ENCODE measurements at regions of chr11 and their contacts with region 1.

Region 1: DNA sequence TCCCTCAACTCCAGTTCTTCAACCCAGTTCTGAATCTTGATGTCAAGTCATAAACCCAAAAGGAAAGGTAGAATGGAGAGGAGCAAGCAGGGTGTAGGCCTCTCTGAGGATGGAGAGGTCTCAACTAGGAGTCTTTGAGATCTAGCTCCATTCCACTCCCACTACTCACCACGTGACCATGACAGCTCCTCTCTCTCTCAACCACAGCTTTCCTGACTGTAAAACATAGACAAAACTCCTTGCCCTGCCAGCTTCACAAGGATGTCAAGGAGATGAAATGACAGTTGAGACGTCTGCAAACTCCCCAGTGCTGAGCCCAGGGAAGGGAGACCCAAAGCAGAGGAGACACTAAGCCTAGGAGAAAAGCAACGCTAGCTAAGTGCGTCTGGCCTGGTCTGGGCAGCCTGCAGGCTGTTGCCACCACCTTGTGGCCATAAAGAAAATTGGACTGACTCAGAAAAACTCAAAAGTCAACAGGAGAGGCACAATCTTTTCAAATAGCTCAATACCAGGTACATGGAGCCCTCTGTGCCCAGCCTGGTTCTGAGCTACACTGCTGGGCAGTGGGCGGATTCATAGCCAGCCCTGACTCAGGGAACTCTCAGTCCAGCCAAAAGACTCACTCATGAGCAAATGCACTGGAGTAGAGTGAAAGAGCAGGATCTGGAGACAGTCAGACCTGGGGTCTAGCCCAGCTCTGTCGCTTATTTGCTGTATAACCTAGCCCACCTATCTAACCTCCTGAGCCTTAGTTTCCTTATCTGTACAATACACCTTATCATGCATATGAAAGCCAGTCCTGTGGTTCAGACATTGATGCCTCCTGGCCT is 3.4 kb downstream of the CLPB start:
- DNase-seq: peak; percentile 60
- ATAC-seq: peak; percentile 28
- H3K4me3 Mint-ChIP-seq: no peak overlapping the region
- H3K27ac Mint-ChIP-seq: peak overlapping the region; percentile 53
- H3K4me1 Mint-ChIP-seq: peaks cover 51% of the 10 kb centered on the region
- H3K27me3 Mint-ChIP-seq: no peaks in the 10 kb centered on the region

Region 2: GRCh38 chr11:71977743-71978418 is 453.1 kb before region 1 on chr11:
- CTCF ChIA-PET with region 1: interaction called, 27 read pairs
- POLR2A ChIA-PET with region 1: no interaction called
- DNase-seq: peak; percentile 74
- ATAC-seq: peak; percentile 70
- H3K4me3 Mint-ChIP-seq: no peak overlapping the region
- H3K27ac Mint-ChIP-seq: no peak overlapping the region
- H3K4me1 Mint-ChIP-seq: no peaks in the 10 kb centered on the region
- H3K27me3 Mint-ChIP-seq: no peaks in the 10 kb centered on the region

Region 3: GRCh38 chr11:72091005-72091691 is 339.8 kb before region 1 on chr11:
- CTCF ChIA-PET with region 1: interaction called, 13 read pairs
- POLR2A ChIA-PET with region 1: no interaction called
- DNase-seq: peak; percentile 76
- ATAC-seq: peak; percentile 87
- H3K4me3 Mint-ChIP-seq: no peak overlapping the region
- H3K27ac Mint-ChIP-seq: peak overlapping the region; percentile 43
- H3K4me1 Mint-ChIP-seq: peaks cover 4% of the 10 kb centered on the region
- H3K27me3 Mint-ChIP-seq: no peaks in the 10 kb centered on the region

Region 4: GRCh38 chr11:72222907-72223614 is 207.9 kb before region 1 on chr11:
- CTCF ChIA-PET with region 1: interaction called, 17 read pairs
- POLR2A ChIA-PET with region 1: interaction called, 6 read pairs
- DNase-seq: peak; percentile 96
- ATAC-seq: peak; percentile 80
- H3K4me3 Mint-ChIP-seq: peak overlapping the region; percentile 85
- H3K27ac Mint-ChIP-seq: peak overlapping the region; percentile 81
- H3K4me1 Mint-ChIP-seq: peaks cover 44% of the 10 kb centered on the region
- H3K27me3 Mint-ChIP-seq: peaks cover 4% of the 10 kb centered on the region

Region 5: DNA sequence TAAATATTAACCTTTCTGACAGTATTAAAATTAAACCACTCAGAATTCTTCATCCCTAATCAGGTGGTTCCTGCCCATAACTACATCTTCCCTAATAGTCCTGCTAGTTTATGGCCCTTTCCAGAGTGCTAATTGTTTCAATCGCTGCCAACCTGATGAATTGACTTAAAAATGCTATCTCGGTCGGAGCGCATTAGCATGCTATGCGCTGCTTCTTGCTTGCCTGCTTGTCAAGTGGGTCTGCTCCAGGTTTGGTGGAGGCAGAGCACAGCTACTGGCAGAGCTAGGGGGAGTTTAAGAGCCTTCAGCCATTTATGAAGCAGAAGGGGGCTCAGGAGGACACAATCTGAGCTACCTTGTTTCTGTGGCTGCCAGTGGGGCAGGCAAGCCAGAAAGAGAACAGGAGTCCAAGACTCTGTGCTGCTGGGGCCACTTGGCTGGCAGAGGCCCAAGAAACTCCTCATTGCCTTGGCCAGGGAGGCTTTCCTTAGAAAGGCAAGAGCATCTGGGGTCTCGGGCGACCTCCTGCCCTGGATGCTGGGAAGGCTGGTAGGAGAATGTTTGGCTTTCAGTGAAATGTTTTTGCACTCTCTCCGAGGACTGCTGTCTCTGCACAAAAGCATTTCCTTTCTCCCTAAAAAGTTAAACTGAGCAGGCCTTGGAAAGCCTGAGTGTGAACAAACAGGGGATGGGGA is 124.9 kb before region 1 on chr11:
- CTCF ChIA-PET with region 1: interaction called, 15 read pairs
- POLR2A ChIA-PET with region 1: no interaction called
- DNase-seq: no peak
- ATAC-seq: no peak
- H3K4me3 Mint-ChIP-seq: no peak overlapping the region
- H3K27ac Mint-ChIP-seq: no peak overlapping the region
- H3K4me1 Mint-ChIP-seq: no peaks in the 10 kb centered on the region
- H3K27me3 Mint-ChIP-seq: no peaks in the 10 kb centered on the region

Region 6: DNA sequence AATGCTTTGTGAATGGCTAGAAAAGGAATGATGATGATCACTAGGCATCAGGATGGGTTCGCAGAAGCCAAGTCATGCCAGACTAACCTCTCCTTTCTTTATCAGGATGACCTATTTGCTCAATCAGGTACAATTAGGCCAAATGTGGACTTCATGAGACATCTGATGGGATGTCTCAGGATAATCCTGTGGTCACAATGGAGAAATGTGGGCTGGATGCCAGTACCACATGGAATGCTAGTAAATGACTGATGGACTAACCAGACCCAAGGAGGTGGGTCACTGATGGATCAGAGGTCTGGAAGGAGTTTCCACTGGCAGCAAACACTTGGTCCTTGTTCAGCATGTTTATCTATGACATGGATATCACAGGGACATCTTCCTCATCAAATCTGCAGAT is 92.2 kb before region 1 on chr11:
- CTCF ChIA-PET with region 1: interaction called, 90 read pairs
- POLR2A ChIA-PET with region 1: no interaction called
- DNase-seq: no peak
- ATAC-seq: no peak
- H3K4me3 Mint-ChIP-seq: no peak overlapping the region
- H3K27ac Mint-ChIP-seq: no peak overlapping the region
- H3K4me1 Mint-ChIP-seq: peaks cover 12% of the 10 kb centered on the region
- H3K27me3 Mint-ChIP-seq: no peaks in the 10 kb centered on the region

Region 7: GRCh38 chr11:72441752-72442207 is 10.8 kb after region 1 on chr11:
- CTCF ChIA-PET with region 1: interaction called, 71 read pairs
- POLR2A ChIA-PET with region 1: interaction called, 3 read pairs
- DNase-seq: no peak
- ATAC-seq: peak; percentile 23
- H3K4me3 Mint-ChIP-seq: no peak overlapping the region
- H3K27ac Mint-ChIP-seq: no peak overlapping the region
- H3K4me1 Mint-ChIP-seq: peaks cover 18% of the 10 kb centered on the region
- H3K27me3 Mint-ChIP-seq: peaks cover 22% of the 10 kb centered on the region

Region 8: GRCh38 chr11:72821883-72822799 is 391.2 kb after region 1 on chr11:
- CTCF ChIA-PET with region 1: no interaction called
- POLR2A ChIA-PET with region 1: no interaction called
- DNase-seq: peak; percentile 82
- ATAC-seq: peak; percentile 82
- H3K4me3 Mint-ChIP-seq: no peak overlapping the region
- H3K27ac Mint-ChIP-seq: no peak overlapping the region
- H3K4me1 Mint-ChIP-seq: peaks cover 31% of the 10 kb centered on the region
- H3K27me3 Mint-ChIP-seq: no peaks in the 10 kb centered on the region

Region 9: GRCh38 chr11:72985645-72986044 is 554.7 kb after region 1 on chr11:
- CTCF ChIA-PET with region 1: no interaction called
- POLR2A ChIA-PET with region 1: no interaction called
- DNase-seq: no peak
- ATAC-seq: no peak
- H3K4me3 Mint-ChIP-seq: no peak overlapping the region
- H3K27ac Mint-ChIP-seq: no peak overlapping the region
- H3K4me1 Mint-ChIP-seq: no peaks in the 10 kb centered on the region
- H3K27me3 Mint-ChIP-seq: no peaks in the 10 kb centered on the region

Measured in activated CD8-positive, alpha-beta T cell treated with anti-CD3 and anti-CD28 coated beads, Interleukin-2, amount 10 ng/mL, durations not matched to agents 7 days and 5 days (primary cell).